ENCODE measurements at regions of chr12 and their contacts with region 1.

Region 1: DNA sequence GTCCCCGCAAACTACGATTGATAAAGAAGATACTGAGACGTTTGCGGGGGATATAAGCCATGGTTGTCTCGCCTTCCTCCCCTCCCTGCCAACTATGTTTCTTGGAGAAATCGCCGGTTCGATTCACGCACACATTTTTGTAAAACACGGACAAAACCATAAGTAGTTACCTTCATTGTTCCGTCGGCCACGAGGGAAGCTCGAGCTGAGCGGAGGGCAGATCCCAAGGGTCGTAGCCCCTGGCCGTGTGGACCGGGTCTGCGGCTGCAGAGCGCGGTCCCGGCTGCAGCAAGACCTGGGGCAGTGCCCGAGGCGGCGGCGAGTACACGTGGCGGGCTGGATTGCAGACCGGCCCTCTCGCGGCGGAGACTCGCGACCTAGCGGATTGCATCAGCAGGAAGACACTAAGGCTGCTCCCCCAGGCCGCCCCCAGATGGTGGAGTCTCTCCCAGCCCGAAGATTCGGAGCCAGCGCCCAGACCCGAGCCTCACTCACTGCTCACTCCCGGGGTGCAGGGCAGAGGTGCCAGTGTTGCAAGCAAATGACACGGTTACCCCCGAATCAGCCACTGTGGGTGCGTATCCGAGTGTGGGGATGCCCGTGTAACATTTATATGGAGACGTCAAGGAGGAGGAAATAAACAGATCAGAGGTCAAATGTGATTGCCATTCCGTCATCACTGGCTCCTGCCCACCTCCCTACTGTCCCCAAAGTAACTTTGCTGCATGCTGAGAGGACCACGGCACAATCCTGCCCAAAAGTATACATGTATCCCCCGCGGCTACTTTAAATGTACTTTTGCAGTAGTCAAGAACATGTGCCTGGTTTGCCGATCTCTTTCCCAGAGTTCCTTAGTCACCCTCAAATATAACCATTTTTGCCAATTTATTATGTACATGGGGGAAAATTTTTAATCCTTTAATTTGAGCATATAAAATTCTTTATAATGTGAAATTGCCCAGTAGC is at the start of gene BCAT1:
- DNase-seq: peak; percentile 70
- ATAC-seq: peak; percentile 66
- H3K4me3 Mint-ChIP-seq: peak within 1 kb of the TSS; percentile 75
- H3K27ac Mint-ChIP-seq: peak within 1 kb of the TSS; percentile 84
- H3K4me1 Mint-ChIP-seq: peaks cover 46% of the 10 kb centered on the region
- H3K27me3 Mint-ChIP-seq: peaks cover 32% of the 10 kb centered on the region
- CTCF ChIP-seq: no peak
- total RNA-seq, gene BCAT1: 53.3 to 55.6 TPM

Region 2: GRCh38 chr12:24902511-24903328 is 46.3 kb before region 1 on chr12:
- CTCF ChIA-PET with region 1: interaction called, 4 read pairs
- POLR2A ChIA-PET with region 1: interaction called, 5 read pairs
- intact Hi-C with region 1: loop called (anchors 5 kb)
- DNase-seq: peak; percentile 64
- ATAC-seq: peak; percentile 45
- H3K4me3 Mint-ChIP-seq: peak overlapping the region; percentile 87
- H3K27ac Mint-ChIP-seq: peak overlapping the region; percentile 88
- H3K4me1 Mint-ChIP-seq: peaks cover 35% of the 10 kb centered on the region
- H3K27me3 Mint-ChIP-seq: peaks cover 17% of the 10 kb centered on the region
- CTCF ChIP-seq: no peak

Region 3: GRCh38 chr12:24922090-24922489 is 26.9 kb before region 1 on chr12:
- CTCF ChIA-PET with region 1: no interaction called
- POLR2A ChIA-PET with region 1: interaction called, 10 read pairs
- intact Hi-C with region 1: no loop called
- DNase-seq: peak; percentile 25
- ATAC-seq: peak; percentile 18
- H3K4me3 Mint-ChIP-seq: no peak overlapping the region
- H3K27ac Mint-ChIP-seq: peak overlapping the region; percentile 43
- H3K4me1 Mint-ChIP-seq: peaks cover 42% of the 10 kb centered on the region
- H3K27me3 Mint-ChIP-seq: peaks cover 4% of the 10 kb centered on the region
- CTCF ChIP-seq: no peak